Naive thymus-derived CD4-positive, alpha-beta T cell (primary cell): ENCODE measurements at regions of chr19 and their contacts with region 1.

Region 1: DNA sequence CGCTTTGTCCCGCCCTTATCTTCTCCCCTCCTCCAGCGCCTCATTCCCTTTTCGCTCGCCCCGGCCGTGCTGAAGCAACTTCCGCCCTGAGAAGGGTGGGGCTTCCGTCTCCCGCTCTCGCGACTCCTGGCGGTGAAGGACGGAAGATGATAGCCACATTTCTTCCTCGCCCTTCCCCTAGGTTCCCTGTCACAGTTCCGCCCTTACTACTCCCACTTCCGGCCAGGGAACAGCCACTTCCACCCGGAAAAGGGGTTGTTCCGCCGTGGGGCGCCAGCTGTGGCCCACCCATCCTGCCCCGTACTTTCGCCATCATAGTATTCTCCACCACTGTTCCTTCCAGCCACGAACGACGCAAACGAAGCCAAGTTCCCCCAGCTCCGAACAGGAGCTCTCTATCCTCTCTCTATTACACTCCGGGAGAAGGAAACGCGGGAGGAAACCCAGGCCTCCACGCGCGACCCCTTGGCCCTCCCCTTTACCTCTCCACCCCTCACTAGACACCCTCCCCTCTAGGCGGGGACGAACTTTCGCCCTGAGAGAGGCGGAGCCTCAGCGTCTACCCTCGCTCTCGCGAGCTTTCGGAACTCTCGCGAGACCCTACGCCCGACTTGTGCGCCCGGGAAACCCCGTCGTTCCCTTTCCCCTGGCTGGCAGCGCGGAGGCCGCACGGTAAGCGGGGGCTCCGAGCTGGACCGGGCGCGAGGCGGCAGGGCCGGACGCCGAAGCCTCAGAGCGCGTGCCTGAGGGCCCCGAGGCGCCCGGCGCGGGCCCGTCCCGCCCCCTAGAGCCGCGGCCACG is at the start of gene RPS19:
- DNase-seq: peak; percentile 95 to 99 (median 98)
- ATAC-seq: peak; percentile 92
- H3K4me3 ChIP-seq: peak within 1 kb of the TSS; percentile 90
- H3K4me3 Mint-ChIP-seq: peak within 1 kb of the TSS; percentile 86 to 95 (median 93)
- H3K27ac ChIP-seq: peak within 1 kb of the TSS; percentile 89
- H3K27ac Mint-ChIP-seq: peak within 1 kb of the TSS; percentile 91 to 98 (median 95)
- H3K4me1 ChIP-seq: peaks cover 39 to 43% of the 10 kb centered on the region in 2 donors
- H3K4me1 Mint-ChIP-seq: peaks cover 34 to 47% (median 41%) of the 10 kb centered on the region in 7 donors
- H3K27me3 ChIP-seq: no peaks in the 10 kb centered on the region
- H3K27me3 Mint-ChIP-seq: peaks cover 0 to 9% (median 0%) of the 10 kb centered on the region in 5 donors
- total RNA-seq, gene RPS19: 2,739 to 3,712 (median 3,396) TPM

Region 2: DNA sequence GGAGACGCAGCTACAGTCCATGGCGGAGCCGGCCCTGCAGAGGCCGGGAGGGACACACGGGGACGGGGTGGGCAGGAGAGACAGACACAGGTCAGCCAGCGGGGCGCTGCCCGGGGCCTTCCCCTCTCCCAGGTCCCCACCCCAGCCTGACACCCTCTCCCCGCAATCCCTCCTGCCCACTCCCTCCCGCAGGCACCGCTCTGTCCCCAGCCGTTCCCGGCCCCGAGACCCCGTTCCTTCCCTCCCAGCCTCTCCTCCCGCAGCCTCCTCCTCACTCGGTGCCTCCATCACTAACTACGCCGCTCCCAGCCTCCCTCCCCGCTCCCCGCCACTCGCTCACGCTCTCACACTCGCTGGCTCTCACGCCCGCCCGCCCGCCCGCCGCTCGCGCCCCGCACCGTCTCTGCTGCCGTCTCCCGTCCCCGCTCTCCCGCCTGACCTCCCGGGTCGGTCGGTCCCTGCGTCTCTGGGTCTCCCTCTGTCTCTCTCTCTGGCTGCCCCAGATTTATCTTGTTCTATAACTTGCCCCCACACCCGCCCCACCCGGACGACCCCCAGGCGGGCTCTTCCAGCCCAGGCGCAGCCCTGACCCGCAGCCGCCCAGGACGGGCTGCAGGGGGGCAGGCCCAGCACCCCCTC is 53.2 kb after region 1 on chr19:
- CTCF ChIA-PET with region 1: no interaction called
- POLR2A ChIA-PET with region 1: interaction called, 14 read pairs
- intact Hi-C with region 1: no loop called
- DNase-seq: peak in 3 of 9 donors; percentile 39 to 46 (median 45)
- ATAC-seq: peak; percentile 32
- H3K4me3 ChIP-seq: no peak overlapping the region
- H3K4me3 Mint-ChIP-seq: peak overlapping the region in 6 of 10 donors; percentile 37 to 71 (median 51)
- H3K27ac ChIP-seq: no peak overlapping the region
- H3K27ac Mint-ChIP-seq: peak overlapping the region in 4 of 9 donors; percentile 35 to 87 (median 78)
- H3K4me1 ChIP-seq: peaks cover 20 to 53% of the 10 kb centered on the region in 2 donors
- H3K4me1 Mint-ChIP-seq: peaks cover 15 to 43% (median 31%) of the 10 kb centered on the region in 7 donors
- H3K27me3 ChIP-seq: peaks cover 0 to 23% of the 10 kb centered on the region in 2 donors
- H3K27me3 Mint-ChIP-seq: peaks cover 0 to 28% (median 0%) of the 10 kb centered on the region in 5 donors

Region 3: DNA sequence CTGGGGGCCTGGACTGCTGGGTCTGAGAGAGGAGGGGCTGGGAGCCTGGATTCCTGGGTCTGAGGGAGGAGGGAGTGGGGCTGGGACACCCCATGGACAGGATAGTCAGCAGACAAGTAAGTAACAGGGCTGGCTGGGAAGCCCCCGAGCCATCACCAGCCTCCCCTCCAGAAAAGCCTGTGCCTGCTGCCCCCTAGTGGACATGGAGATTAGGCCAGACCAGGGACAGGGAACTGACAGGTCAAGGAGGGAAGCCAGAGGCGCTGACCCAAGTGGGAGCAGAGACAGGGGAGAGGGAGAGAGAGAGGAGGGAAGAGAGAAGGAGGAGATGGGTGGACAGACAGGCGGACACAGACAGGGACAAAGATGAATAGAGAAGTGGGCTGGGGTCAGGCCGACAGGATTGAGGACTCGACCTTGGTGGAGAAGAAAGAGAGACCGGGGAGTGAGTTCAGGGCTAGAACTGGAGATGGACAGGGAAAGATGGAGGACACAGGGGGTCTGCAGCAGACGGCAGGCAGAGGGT is 75.1 kb after region 1 on chr19:
- CTCF ChIA-PET with region 1: interaction called, 5 read pairs
- POLR2A ChIA-PET with region 1: interaction called, 7 read pairs
- intact Hi-C with region 1: loop called (anchors 1 to 2 kb)
- DNase-seq: peak; percentile 47 to 78 (median 67)
- ATAC-seq: peak; percentile 83
- H3K4me3 ChIP-seq: no peak overlapping the region
- H3K4me3 Mint-ChIP-seq: peak overlapping the region in 4 of 10 donors; percentile 30 to 66 (median 33)
- H3K27ac ChIP-seq: peak overlapping the region; percentile 40
- H3K27ac Mint-ChIP-seq: peak overlapping the region; percentile 46 to 88 (median 81)
- H3K4me1 ChIP-seq: peaks cover 26 to 29% of the 10 kb centered on the region in 2 donors
- H3K4me1 Mint-ChIP-seq: peaks cover 37 to 63% (median 48%) of the 10 kb centered on the region in 7 donors
- H3K27me3 ChIP-seq: peaks cover 0 to 4% of the 10 kb centered on the region in 2 donors
- H3K27me3 Mint-ChIP-seq: peaks cover 0 to 24% (median 0%) of the 10 kb centered on the region in 5 donors

Region 4: GRCh38 chr19:41951686-41952172 is 91.9 kb after region 1 on chr19:
- CTCF ChIA-PET with region 1: interaction called, 22 read pairs
- POLR2A ChIA-PET with region 1: interaction called, 29 read pairs
- intact Hi-C with region 1: loop called (anchors 1 kb)
- DNase-seq: peak; percentile 63 to 93 (median 78)
- ATAC-seq: peak; percentile 95
- H3K4me3 ChIP-seq: no peak overlapping the region
- H3K4me3 Mint-ChIP-seq: peak overlapping the region in 2 of 10 donors; percentile 54 to 67
- H3K27ac ChIP-seq: peak overlapping the region; percentile 15
- H3K27ac Mint-ChIP-seq: peak overlapping the region in 8 of 9 donors; percentile 48 to 89 (median 63)
- H3K4me1 ChIP-seq: peaks cover 0 to 15% of the 10 kb centered on the region in 2 donors
- H3K4me1 Mint-ChIP-seq: peaks cover 11 to 19% (median 12%) of the 10 kb centered on the region in 7 donors
- H3K27me3 ChIP-seq: no peaks in the 10 kb centered on the region
- H3K27me3 Mint-ChIP-seq: no peaks in the 10 kb centered on the region

Region 5: DNA sequence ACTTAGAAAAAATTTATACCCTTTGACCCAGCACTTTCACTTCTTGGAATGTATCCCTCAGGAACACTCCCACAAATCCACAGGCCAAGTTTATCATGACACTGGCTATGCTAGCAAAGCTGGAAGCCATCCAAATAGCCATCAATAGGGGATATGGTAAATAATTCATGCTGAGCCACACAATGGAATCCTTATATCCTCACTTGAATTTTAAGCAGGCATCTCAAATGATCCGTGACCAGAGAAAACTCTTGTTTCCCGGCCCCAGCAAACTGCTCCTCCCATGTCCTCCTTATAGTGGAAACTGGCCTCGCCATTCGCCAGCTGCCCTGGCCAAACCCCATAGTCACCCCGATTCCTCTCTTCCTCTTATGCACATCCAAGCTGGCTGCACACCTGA is 172.6 kb after region 1 on chr19:
- CTCF ChIA-PET with region 1: interaction called, 6 read pairs
- POLR2A ChIA-PET with region 1: no interaction called
- intact Hi-C with region 1: loop called in 1 of 2 experiments (anchors 1 kb)
- DNase-seq: no peak
- ATAC-seq: no peak
- H3K4me3 ChIP-seq: no peak overlapping the region
- H3K4me3 Mint-ChIP-seq: no peak overlapping the region
- H3K27ac ChIP-seq: no peak overlapping the region
- H3K27ac Mint-ChIP-seq: peak overlapping the region in 1 of 9 donors; percentile 88
- H3K4me1 ChIP-seq: no peaks in the 10 kb centered on the region
- H3K4me1 Mint-ChIP-seq: peaks cover 0 to 8% (median 0%) of the 10 kb centered on the region in 7 donors
- H3K27me3 ChIP-seq: no peaks in the 10 kb centered on the region
- H3K27me3 Mint-ChIP-seq: peaks cover 0 to 11% (median 6%) of the 10 kb centered on the region in 5 donors

Region 6: DNA sequence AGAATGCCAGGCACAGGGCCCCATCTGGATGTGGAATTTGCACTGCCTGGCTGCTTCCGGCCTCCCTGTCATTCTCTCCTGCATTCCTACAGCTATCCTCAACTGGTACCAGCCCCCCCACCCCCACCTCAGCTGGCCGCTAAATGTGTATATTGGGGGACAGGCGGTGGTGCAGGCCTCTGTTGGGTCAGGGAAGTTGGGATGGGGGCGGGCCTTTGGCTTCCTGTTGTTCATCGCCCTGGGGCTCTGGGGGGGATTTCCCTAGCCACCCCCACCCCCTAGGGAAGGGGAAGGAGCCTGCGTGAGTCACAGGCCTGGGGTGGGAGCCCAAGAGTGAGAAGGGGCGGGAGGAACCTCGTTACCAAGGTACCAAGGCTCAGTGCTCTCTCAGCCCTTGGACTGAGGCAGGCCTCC is 261.8 kb after region 1 on chr19:
- CTCF ChIA-PET with region 1: no interaction called
- POLR2A ChIA-PET with region 1: no interaction called
- intact Hi-C with region 1: no loop called
- DNase-seq: peak; percentile 15 to 83 (median 41)
- ATAC-seq: peak; percentile 95
- H3K4me3 ChIP-seq: peak overlapping the region; percentile 44
- H3K4me3 Mint-ChIP-seq: peak overlapping the region; percentile 43 to 90 (median 72)
- H3K27ac ChIP-seq: peak overlapping the region; percentile 77
- H3K27ac Mint-ChIP-seq: peak overlapping the region; percentile 78 to 98 (median 93)
- H3K4me1 ChIP-seq: peaks cover 31 to 44% of the 10 kb centered on the region in 2 donors
- H3K4me1 Mint-ChIP-seq: peaks cover 30 to 70% (median 57%) of the 10 kb centered on the region in 7 donors
- H3K27me3 ChIP-seq: no peaks in the 10 kb centered on the region
- H3K27me3 Mint-ChIP-seq: no peaks in the 10 kb centered on the region

Region 7: GRCh38 chr19:42219812-42220750 is 360.3 kb after region 1 on chr19 and contains the start of gene ZNF526:
- CTCF ChIA-PET with region 1: no interaction called
- POLR2A ChIA-PET with region 1: no interaction called
- intact Hi-C with region 1: loop called in 1 of 2 experiments (anchors 2 kb)
- DNase-seq: peak; percentile 92 to 97 (median 96)
- ATAC-seq: peak; percentile 88
- H3K4me3 ChIP-seq: peak within 1 kb of the TSS; percentile 72
- H3K4me3 Mint-ChIP-seq: peak within 1 kb of the TSS; percentile 95 to 99 (median 98)
- H3K27ac ChIP-seq: peak within 1 kb of the TSS; percentile 88
- H3K27ac Mint-ChIP-seq: peak within 1 kb of the TSS; percentile 88 to 98 (median 95)
- H3K4me1 ChIP-seq: peaks cover 37 to 43% of the 10 kb centered on the region in 2 donors
- H3K4me1 Mint-ChIP-seq: peaks cover 46 to 62% (median 55%) of the 10 kb centered on the region in 7 donors
- H3K27me3 ChIP-seq: no peaks in the 10 kb centered on the region
- H3K27me3 Mint-ChIP-seq: peaks cover 0 to 3% (median 0%) of the 10 kb centered on the region in 5 donors
- total RNA-seq, gene ZNF526: 8.6 to 25.2 (median 22.7) TPM